Activated CD8-positive, alpha-beta T cell treated with anti-CD3 and anti-CD28 coated beads for 36 hours (primary cell): ENCODE measurements at regions of chr1 and their contacts with region 1.

Region 1: DNA sequence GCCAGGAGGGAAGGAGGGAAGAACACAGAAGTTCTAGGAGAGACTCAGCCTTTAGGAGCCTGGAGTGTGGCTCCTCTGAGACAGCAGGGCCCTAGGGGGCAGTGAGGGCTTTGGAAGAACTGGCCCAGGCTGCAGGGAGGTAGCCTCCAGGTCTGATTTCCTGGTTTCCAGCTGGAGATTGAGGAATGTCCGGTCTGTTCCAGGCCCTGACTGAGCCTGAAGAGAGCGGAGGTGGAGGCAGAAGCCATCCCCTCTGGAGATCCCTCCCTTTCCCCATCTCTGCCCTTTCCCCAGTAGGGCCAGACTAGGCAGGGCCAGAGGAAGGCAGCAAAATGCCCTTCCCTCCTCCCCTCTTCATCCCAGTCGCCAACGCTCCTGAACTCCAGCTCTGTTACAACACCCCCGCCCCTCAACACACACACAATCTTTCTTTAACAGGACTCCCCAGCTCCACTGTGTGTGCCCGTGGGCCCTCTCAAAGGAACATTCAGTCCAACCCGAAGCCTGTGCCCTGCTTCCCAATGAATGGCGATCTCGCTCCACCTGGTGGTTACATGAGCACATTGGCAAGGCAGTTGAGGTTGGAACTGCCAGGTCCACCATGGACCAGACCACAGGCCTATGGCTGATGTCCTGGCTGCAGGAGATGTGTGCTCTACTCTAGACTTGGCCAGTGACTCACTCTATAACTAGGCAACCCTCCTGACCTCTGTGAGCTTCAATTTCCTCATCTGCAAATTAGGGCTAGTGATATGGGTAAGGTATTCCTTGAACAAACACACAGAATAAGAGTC is 32.0 kb downstream of the MAP7D1 start:
- DNase-seq: peak; percentile 88
- ATAC-seq: peak; percentile 98
- H3K4me3 Mint-ChIP-seq: no peak overlapping the region
- H3K27ac Mint-ChIP-seq: peak overlapping the region; percentile 24
- H3K4me1 Mint-ChIP-seq: peaks cover 2% of the 10 kb centered on the region
- H3K27me3 Mint-ChIP-seq: no peaks in the 10 kb centered on the region
- CTCF ChIP-seq: peak; percentile 81

Region 2: DNA sequence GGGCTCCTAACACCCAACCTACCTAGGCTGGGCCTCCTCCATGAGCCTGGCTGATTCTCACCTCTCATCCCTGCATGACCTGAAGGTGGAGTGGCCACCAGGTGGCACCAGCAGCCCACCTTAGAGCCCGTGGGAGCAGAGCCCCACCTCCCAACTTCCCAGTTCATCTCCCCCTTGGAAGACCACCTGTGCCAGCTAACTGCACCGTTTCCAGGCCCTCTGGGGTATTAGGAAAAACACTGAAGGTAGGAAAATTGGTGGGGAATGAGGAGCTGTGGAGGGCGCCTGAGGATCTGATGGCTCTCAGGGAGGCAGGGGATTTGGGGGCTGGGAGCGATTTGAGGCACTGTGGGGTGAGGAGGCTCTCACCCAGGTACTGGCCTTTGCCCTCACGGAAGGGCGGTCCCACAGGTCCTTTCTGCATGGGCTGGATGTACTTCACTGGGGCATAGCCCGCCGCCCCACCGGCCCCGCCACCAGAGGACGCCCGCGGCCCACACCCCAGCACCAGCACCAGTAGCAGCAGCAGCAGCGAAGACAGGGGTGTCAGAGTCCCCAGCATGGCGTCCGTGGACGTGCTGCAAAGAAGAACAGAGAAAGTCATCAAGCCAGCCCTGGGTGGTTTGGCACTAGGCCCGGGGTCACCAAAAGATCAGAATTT is 88.2 kb before region 1 on chr1:
- CTCF ChIA-PET with region 1: interaction called, 24 read pairs
- POLR2A ChIA-PET with region 1: no interaction called
- intact Hi-C with region 1: no loop called
- DNase-seq: peak; percentile 86
- ATAC-seq: peak; percentile 92
- H3K4me3 Mint-ChIP-seq: no peak overlapping the region
- H3K27ac Mint-ChIP-seq: no peak overlapping the region
- H3K4me1 Mint-ChIP-seq: peaks cover 6% of the 10 kb centered on the region
- H3K27me3 Mint-ChIP-seq: no peaks in the 10 kb centered on the region
- CTCF ChIP-seq: peak; percentile 93

Region 3: GRCh38 chr1:36155408-36156328 is 32.3 kb before region 1 on chr1 and contains the start of gene MAP7D1:
- CTCF ChIA-PET with region 1: interaction called, 84 read pairs
- POLR2A ChIA-PET with region 1: interaction called, 22 read pairs
- intact Hi-C with region 1: no loop called
- DNase-seq: peak; percentile 89
- ATAC-seq: peak; percentile 60
- H3K4me3 Mint-ChIP-seq: peak within 1 kb of the TSS; percentile 83
- H3K27ac Mint-ChIP-seq: peak within 1 kb of the TSS; percentile 95
- H3K4me1 Mint-ChIP-seq: peaks cover 66% of the 10 kb centered on the region
- H3K27me3 Mint-ChIP-seq: no peaks in the 10 kb centered on the region
- CTCF ChIP-seq: no peak
- total RNA-seq, gene MAP7D1: 125 to 129 TPM

Region 4: DNA sequence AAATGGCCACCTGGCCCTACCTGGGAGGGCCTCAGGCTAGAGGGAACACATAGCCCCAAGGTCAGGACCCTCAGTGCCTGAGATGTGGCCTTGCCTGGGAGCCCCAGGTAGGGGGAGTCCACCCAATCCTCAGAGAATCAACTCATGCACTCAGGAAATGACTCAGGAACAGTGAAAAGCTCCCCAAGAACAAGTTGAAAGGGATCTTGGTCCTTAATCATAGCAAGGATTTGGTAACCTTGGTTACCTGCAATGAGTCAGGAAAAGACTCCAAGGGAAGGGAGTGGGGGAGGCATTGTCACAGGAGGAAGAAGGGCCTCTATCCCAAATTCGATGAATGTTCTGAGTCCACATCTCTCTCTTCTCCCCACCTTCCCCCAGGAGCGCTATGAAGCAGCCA is 15.0 kb before region 1 on chr1:
- CTCF ChIA-PET with region 1: interaction called, 11 read pairs
- POLR2A ChIA-PET with region 1: interaction called, 13 read pairs
- intact Hi-C with region 1: no loop called
- DNase-seq: no peak
- ATAC-seq: no peak
- H3K4me3 Mint-ChIP-seq: no peak overlapping the region
- H3K27ac Mint-ChIP-seq: no peak overlapping the region
- H3K4me1 Mint-ChIP-seq: peaks cover 8% of the 10 kb centered on the region
- H3K27me3 Mint-ChIP-seq: no peaks in the 10 kb centered on the region
- CTCF ChIP-seq: no peak

Region 5: GRCh38 chr1:36223993-36224536 is 36.1 kb after region 1 on chr1 and contains the start of gene THRAP3:
- CTCF ChIA-PET with region 1: interaction called, 22 read pairs
- POLR2A ChIA-PET with region 1: interaction called, 6 read pairs
- intact Hi-C with region 1: no loop called
- DNase-seq: peak; percentile 100
- ATAC-seq: peak; percentile 91
- H3K4me3 Mint-ChIP-seq: peak within 1 kb of the TSS; percentile 85
- H3K27ac Mint-ChIP-seq: peak within 1 kb of the TSS; percentile 99
- H3K4me1 Mint-ChIP-seq: peaks cover 27% of the 10 kb centered on the region
- H3K27me3 Mint-ChIP-seq: no peaks in the 10 kb centered on the region
- CTCF ChIP-seq: no peak
- total RNA-seq, gene THRAP3: 119 to 121 TPM